HEK293T (cell line): ENCODE measurements at regions of chr1 and their contacts with region 1.

Region 1: DNA sequence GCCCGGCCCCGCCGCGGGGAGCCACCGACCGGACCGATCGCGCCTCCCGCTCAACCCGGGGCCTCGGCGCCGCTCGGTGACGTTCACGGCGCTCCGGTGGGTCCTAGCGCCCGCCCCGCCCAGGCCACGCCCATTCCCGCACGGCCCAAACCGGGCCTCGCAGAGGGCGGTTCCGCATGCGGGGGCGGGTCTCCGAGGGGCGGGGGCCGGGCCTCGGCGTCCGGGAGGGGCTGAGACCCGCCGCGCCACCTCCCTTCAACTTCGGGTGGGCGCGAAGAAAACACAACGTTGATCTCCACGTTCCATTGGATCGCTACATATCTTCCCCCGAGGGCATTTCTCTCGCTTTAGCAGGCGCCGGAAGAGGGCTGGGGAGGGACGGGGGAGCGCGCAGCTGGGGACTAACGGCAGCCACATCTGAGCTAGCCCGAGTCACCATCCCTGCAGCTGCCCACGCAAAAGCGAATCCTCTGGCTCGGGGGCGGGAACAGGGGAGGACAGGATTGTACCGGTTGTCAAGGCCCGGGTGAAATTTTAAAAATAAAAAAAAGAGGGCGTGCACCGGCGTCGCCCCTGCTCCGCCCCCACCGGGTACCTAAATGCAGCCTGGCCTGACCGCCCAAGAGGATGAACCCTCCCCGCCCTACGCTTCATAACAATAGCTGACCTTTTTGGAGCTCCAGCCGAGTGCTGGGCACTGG is at the start of gene MAD2L2:
- DNase-seq: peak; percentile 91

Region 2: GRCh38 chr1:11658308-11658941 is 22.8 kb before region 1 on chr1:
- CTCF ChIA-PET with region 1: no interaction called
- POLR2A ChIA-PET with region 1: no interaction called
- DNase-seq: no peak

Region 3: DNA sequence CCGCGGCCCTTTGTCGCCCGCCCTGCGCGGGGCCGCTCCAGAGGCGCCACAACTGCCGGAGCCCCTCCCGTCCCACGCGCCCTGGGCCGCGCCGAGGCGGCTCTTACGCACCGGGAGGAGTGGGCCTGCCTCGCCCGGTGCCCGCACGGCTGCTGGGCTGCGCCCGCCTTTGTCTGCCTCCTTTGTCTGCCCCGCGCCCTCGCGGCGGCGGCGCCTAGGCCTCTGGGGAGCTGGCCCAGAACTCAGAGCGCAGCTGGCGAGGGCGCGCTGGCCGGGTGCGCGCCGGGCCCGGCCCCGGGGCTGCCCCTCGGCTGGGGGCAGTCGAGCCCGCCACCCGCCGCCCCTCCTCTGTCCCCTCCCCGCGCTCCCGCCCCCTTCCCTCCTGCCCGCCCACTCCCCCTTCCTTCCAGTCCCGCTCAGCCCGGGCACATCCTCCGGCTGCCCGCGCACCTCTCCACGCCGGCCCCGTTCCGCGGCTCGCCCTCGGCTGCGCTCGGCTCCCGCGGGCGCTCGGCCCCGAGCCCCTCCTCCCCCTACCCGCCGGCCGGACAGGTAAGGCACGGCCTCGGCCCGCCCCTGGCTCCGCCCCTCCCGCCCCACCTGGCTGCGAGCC is 10.2 kb after region 1 on chr1 and contains the start of gene DRAXIN:
- CTCF ChIA-PET with region 1: interaction called, 6 read pairs
- POLR2A ChIA-PET with region 1: interaction called, 16 read pairs
- DNase-seq: no peak

Region 4: GRCh38 chr1:11711490-11711889 is 30.3 kb after region 1 on chr1:
- CTCF ChIA-PET with region 1: interaction called, 12 read pairs
- POLR2A ChIA-PET with region 1: interaction called, 3 read pairs
- DNase-seq: no peak